ENCODE measurements at regions of chr1 and their contacts with region 1.

Region 1: DNA sequence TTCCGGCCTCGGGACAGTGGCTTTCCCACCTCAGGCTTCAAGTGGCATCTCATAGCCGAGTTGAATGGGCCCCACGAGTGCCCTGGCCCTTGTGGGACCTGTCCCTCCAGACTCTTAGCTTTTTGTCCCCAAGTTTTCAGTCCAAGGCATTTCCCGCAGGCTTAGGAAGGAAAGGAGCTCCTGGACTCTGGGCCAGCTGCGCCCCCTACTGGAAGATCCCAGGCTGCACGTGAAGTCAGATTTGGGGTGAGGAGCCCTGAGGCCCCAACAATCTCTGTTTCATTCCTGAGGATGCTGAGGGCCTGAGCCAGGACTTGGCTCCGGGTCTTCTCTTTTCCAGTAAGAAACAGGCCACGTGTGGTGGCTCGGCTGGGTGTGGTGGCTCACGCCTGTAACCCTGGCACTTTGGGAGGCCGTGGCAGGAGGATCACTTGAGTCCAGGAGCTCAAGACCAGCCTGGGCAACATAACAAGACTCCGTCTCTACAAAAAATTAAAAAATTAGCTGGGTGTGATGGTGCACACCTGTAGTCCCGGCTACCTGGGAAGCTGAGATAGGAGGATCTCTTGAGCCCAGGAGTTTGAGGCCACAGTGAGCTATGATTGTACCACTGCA is 67.4 kb downstream of the ARHGEF10L start:
- DNase-seq: peak; percentile 77
- ATAC-seq: peak; percentile 56 to 66

Region 2: GRCh38 chr1:17439250-17440073 is 167.5 kb before region 1 on chr1 and contains the start of gene RCC2:
- intact Hi-C with region 1: loop called in 1 of 2 experiments (anchors 10 kb)
- DNase-seq: peak; percentile 80
- ATAC-seq: peak; percentile 87
- total RNA-seq, gene RCC2: 15.6 to 20.8 TPM

Region 3: DNA sequence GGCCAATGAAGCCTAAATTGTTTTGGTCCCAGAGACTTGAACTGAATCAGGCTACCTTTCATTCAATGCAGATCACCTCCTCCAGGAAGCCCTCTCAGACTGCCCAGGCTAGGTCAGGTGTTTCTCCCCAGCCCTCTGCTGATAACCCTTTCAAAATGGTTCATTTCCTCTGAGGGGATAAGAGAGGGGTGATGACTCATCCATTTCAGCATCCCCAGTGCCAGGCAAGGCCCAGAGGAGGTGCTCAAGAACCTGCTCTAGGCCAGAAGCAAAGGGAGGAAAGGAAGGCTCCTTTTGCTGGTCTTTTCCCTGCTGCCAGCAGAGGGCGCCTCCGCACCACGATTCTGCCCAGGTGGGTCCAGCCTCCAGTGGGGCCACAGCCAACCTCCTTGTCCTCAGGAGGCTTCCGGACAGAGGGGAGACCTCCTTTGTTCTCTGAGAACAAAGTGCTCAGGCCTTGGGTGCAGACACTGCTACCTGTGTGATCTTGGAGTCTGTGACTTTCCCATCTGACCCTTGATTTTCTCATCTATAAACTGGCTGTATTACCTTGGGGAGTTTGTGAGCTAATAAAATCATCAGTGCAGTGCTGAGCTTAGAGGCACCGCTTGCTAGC is 112.7 kb before region 1 on chr1:
- intact Hi-C with region 1: loop called in 1 of 2 experiments (anchors 2 kb)
- DNase-seq: peak; percentile 78
- ATAC-seq: peak; percentile 79 to 93

Region 4: DNA sequence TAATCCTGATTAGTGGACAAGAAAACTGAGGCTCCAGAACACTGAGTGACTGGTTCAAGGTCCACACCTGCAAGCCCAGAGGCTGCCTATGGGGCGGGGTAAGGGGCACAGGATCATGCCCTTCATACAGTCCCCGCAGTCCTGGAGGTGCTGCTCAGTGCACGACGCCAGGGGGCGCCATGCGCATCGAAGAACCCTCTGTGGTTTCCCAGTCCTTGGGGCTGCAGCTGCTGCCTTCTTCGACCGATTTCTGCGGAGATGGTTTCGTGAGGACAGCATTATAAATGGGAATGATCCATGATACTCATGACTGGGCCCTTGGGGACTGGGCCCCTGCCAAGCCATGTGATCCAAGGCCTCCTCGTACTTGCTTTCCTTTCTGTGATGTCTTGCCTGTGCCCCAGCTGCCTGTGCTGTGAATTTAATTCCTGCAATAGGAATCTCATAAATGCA is 104.6 kb before region 1 on chr1:
- intact Hi-C with region 1: loop called (anchors 2 to 5 kb)
- DNase-seq: peak; percentile 85
- ATAC-seq: peak; percentile 97 to 98

Region 5: GRCh38 chr1:17540255-17541001 is 66.5 kb before region 1 on chr1:
- intact Hi-C with region 1: loop called in 1 of 2 experiments (anchors 10 kb)
- DNase-seq: peak; percentile 76
- ATAC-seq: peak; percentile 83 to 84

Measured in left cardiac atrium (tissue), 4 donors.